B cell (primary cell): ENCODE measurements at regions of chr17 and their contacts with region 1.

Region 1: DNA sequence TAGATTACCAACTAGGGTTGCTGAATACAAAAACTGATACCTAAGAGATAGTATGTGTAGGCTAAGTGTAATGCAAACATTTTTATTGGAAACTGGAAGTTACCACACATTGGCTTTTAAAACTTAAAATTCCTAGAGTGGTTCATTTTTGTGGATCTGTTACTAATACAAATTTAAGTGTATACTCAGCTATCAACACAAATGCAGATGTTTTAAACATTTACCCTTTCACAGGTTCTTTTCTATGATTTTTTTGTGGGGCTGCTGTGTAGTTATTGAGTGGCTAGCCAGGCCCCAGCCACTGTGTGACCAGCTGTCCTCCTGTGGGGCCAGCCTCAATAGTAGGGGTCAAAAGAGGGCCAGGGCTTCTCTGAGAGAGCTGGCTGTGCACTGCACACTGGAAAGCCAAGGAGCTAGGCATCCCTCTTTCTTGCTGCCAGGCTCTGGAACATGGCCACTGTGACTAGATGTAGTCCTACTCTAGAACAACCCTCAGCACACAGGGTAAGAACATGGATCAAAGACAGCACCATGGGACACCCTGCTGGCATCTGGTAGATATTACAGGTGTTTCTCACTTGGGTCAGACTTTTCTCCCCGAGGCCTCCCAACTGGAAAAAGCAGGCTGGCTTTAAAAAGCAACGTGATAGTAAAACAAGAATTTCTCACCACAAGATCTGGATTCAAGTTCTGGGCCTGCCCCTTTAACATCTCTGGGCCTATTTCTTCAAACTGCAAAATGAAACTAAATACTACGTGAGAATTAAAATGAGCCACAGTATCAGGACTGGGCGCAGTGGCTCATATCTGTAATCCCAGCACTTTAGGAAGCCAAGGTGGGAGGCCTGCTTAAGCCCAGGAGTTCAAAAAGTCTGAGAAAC is 7.3 kb upstream of the VEZF1 start:
- DNase-seq: peak; percentile 71
- ATAC-seq: peak; percentile 87
- H3K4me3 ChIP-seq: no peak overlapping the region
- H3K4me3 Mint-ChIP-seq: no peak overlapping the region
- H3K27ac ChIP-seq: peak overlapping the region in 1 of 2 donors; percentile 47
- H3K27ac Mint-ChIP-seq: peak overlapping the region; percentile 4
- H3K4me1 ChIP-seq: peaks cover 20 to 25% of the 10 kb centered on the region in 2 donors
- H3K4me1 Mint-ChIP-seq: peaks cover 35% of the 10 kb centered on the region
- H3K27me3 ChIP-seq: no peaks in the 10 kb centered on the region
- H3K27me3 Mint-ChIP-seq: no peaks in the 10 kb centered on the region
- CTCF ChIP-seq: peak; percentile 76

Region 2: DNA sequence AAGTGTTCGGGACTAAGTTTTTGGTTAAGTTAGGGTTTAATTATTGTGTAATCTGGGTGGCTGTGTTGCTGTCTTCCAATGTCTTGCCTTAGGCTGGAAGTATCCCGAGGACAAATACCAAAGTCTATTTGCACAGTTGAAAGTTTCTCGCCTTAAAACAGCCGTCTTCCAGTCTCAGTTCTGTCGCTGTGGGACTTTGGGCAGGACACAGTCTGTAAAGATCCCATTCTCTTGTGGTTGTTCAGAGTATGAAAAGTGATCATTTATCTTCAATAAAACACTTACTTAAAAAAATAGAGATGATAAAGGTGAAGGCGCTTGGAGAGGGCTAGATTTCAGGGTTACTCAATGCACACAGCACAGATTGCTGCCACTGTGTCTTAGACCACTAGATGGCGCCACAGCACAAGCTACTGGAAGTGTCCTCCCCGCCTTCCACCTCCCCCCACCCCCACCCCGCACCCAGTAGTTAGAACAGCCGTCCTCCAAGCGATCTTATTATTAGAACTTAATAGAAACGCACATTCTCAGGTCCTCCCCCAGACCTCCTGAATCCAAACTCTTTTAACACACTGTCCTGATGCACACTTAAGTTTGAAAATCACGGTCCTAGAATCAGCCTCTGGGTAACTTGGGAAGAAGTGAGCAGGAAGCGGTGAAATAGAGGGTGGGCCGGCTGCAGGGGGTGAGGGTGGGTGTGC is 864.4 kb before region 1 on chr17:
- CTCF ChIA-PET with region 1: interaction called, 3 read pairs
- POLR2A ChIA-PET with region 1: no interaction called
- intact Hi-C with region 1: loop called (anchors 1 kb)
- DNase-seq: peak; percentile 85
- ATAC-seq: peak; percentile 98
- H3K4me3 ChIP-seq: no peak overlapping the region
- H3K4me3 Mint-ChIP-seq: no peak overlapping the region
- H3K27ac ChIP-seq: no peak overlapping the region
- H3K27ac Mint-ChIP-seq: no peak overlapping the region
- H3K4me1 ChIP-seq: peaks cover 8 to 14% of the 10 kb centered on the region in 2 donors
- H3K4me1 Mint-ChIP-seq: peaks cover 15% of the 10 kb centered on the region
- H3K27me3 ChIP-seq: no peaks in the 10 kb centered on the region
- H3K27me3 Mint-ChIP-seq: peaks cover 22% of the 10 kb centered on the region
- CTCF ChIP-seq: peak; percentile 87

Region 3: GRCh38 chr17:57849874-57850754 is 145.2 kb before region 1 on chr17 and contains the start of gene MRPS23:
- CTCF ChIA-PET with region 1: interaction called, 468 read pairs
- POLR2A ChIA-PET with region 1: interaction called, 4 read pairs
- intact Hi-C with region 1: no loop called
- DNase-seq: peak; percentile 97
- ATAC-seq: peak; percentile 95
- H3K4me3 ChIP-seq: peak within 1 kb of the TSS; percentile 64 to 96 (median 85)
- H3K4me3 Mint-ChIP-seq: peak within 1 kb of the TSS; percentile 99
- H3K27ac ChIP-seq: peak within 1 kb of the TSS; percentile 86 to 92
- H3K27ac Mint-ChIP-seq: peak within 1 kb of the TSS; percentile 100
- H3K4me1 ChIP-seq: peaks cover 17 to 28% of the 10 kb centered on the region in 2 donors
- H3K4me1 Mint-ChIP-seq: peaks cover 39% of the 10 kb centered on the region
- H3K27me3 ChIP-seq: no peaks in the 10 kb centered on the region
- H3K27me3 Mint-ChIP-seq: no peaks in the 10 kb centered on the region
- CTCF ChIP-seq: no peak
- total RNA-seq, gene MRPS23: 25.4 and 32.3 TPM in 2 replicates

Region 4: GRCh38 chr17:57892146-57892828 is 103.0 kb before region 1 on chr17:
- CTCF ChIA-PET with region 1: interaction called, 214 read pairs
- POLR2A ChIA-PET with region 1: no interaction called
- intact Hi-C with region 1: loop called (anchors 1 kb)
- DNase-seq: peak; percentile 80
- ATAC-seq: peak; percentile 93
- H3K4me3 ChIP-seq: no peak overlapping the region
- H3K4me3 Mint-ChIP-seq: no peak overlapping the region
- H3K27ac ChIP-seq: no peak overlapping the region
- H3K27ac Mint-ChIP-seq: peak overlapping the region; percentile 11
- H3K4me1 ChIP-seq: peaks cover 0 to 3% of the 10 kb centered on the region in 2 donors
- H3K4me1 Mint-ChIP-seq: peaks cover 5% of the 10 kb centered on the region
- H3K27me3 ChIP-seq: peaks cover 0 to 35% (median 12%) of the 10 kb centered on the region in 4 experiments
- H3K27me3 Mint-ChIP-seq: peaks cover 41% of the 10 kb centered on the region
- CTCF ChIP-seq: peak; percentile 96

Region 5: GRCh38 chr17:57923182-57923872 is 72.0 kb before region 1 on chr17:
- CTCF ChIA-PET with region 1: interaction called, 40 read pairs
- POLR2A ChIA-PET with region 1: interaction called, 3 read pairs
- intact Hi-C with region 1: no loop called
- DNase-seq: no peak
- ATAC-seq: no peak
- H3K4me3 ChIP-seq: no peak overlapping the region
- H3K4me3 Mint-ChIP-seq: no peak overlapping the region
- H3K27ac ChIP-seq: no peak overlapping the region
- H3K27ac Mint-ChIP-seq: no peak overlapping the region
- H3K4me1 ChIP-seq: peaks cover 0 to 5% of the 10 kb centered on the region in 2 donors
- H3K4me1 Mint-ChIP-seq: peaks cover 2% of the 10 kb centered on the region
- H3K27me3 ChIP-seq: peaks cover 0 to 60% (median 34%) of the 10 kb centered on the region in 4 experiments
- H3K27me3 Mint-ChIP-seq: peaks cover 58% of the 10 kb centered on the region
- CTCF ChIP-seq: no peak

Region 6: GRCh38 chr17:57946798-57947358 is 48.4 kb before region 1 on chr17:
- CTCF ChIA-PET with region 1: interaction called, 31 read pairs
- POLR2A ChIA-PET with region 1: no interaction called
- intact Hi-C with region 1: no loop called
- DNase-seq: peak; percentile 75
- ATAC-seq: peak; percentile 88
- H3K4me3 ChIP-seq: peak overlapping the region; percentile 28 to 57 (median 50)
- H3K4me3 Mint-ChIP-seq: peak overlapping the region; percentile 96
- H3K27ac ChIP-seq: no peak overlapping the region
- H3K27ac Mint-ChIP-seq: peak overlapping the region; percentile 64
- H3K4me1 ChIP-seq: peaks cover 30 to 55% of the 10 kb centered on the region in 2 donors
- H3K4me1 Mint-ChIP-seq: peaks cover 50% of the 10 kb centered on the region
- H3K27me3 ChIP-seq: peaks cover 0 to 48% (median 20%) of the 10 kb centered on the region in 4 experiments
- H3K27me3 Mint-ChIP-seq: peaks cover 56% of the 10 kb centered on the region
- CTCF ChIP-seq: no peak

Region 7: DNA sequence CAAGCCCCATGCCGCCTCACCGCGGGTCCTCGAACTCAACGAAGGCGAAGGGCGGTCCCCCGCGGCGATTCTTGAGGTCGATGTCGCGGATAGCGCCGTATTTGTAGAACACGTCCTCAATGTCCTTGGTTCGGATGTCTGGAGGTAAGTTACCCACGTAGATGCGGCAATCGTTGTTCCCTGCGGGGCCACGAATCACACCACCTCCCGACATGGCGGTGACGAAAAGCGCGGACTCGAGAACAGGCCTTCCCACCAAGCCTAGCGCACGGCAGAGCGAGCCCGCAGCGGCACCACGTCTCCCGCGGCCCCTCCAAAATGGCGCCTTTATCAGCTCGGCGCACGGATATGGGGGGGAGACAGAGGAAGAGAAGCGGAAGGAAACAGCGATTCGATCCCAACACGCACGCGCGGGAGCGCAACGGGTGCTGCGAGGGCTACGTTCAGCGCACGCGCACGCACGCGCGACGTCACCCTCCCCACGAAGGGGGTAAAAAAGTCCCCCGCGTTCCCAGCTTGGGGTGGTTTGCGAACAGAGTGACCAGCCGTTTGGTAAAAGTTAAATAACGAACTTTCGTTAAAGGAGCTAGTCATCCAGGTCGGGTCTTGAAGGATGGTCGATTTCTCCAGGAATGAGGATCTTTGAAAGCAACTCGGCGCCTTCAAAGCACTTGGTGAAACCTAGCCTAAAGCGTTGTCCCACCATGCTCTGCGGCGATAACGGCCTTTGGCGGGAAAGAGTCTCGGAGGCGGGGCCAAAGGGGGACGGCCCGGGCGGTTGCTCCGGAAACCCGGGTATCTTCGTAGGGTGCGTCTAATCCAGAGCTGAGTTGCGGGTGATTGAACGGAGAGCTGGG is 11.8 kb after region 1 on chr17 and contains the start of gene SRSF1:
- CTCF ChIA-PET with region 1: interaction called, 17 read pairs
- POLR2A ChIA-PET with region 1: interaction called, 17 read pairs
- intact Hi-C with region 1: no loop called
- DNase-seq: peak; percentile 99
- ATAC-seq: peak; percentile 87
- H3K4me3 ChIP-seq: peak within 1 kb of the TSS; percentile 83 to 100 (median 96)
- H3K4me3 Mint-ChIP-seq: peak within 1 kb of the TSS; percentile 100
- H3K27ac ChIP-seq: peak within 1 kb of the TSS; percentile 93 to 95
- H3K27ac Mint-ChIP-seq: peak within 1 kb of the TSS; percentile 100
- H3K4me1 ChIP-seq: peaks cover 25 to 38% of the 10 kb centered on the region in 2 donors
- H3K4me1 Mint-ChIP-seq: peaks cover 46% of the 10 kb centered on the region
- H3K27me3 ChIP-seq: no peaks in the 10 kb centered on the region
- H3K27me3 Mint-ChIP-seq: no peaks in the 10 kb centered on the region
- CTCF ChIP-seq: no peak
- total RNA-seq, gene SRSF1: 221 and 250 TPM in 2 replicates